Dendritic cell treated with granulocyte-macrophage colony-stimulating factor and Interleukin-4, amounts not matched to agents 40 ng/mL and 50 ng/mL, for 4 days (primary cell): ENCODE measurements at regions of chr5 and their contacts with region 1.

Region 1: GRCh38 chr5:14364576-14365472 is 216.8 kb upstream of the OTULINL start:
- H3K4me3 Mint-ChIP-seq: no peak overlapping the region
- H3K27ac Mint-ChIP-seq: no peak overlapping the region
- H3K4me1 Mint-ChIP-seq: peaks cover 27% of the 10 kb centered on the region
- H3K27me3 Mint-ChIP-seq: no peaks in the 10 kb centered on the region

Region 2: DNA sequence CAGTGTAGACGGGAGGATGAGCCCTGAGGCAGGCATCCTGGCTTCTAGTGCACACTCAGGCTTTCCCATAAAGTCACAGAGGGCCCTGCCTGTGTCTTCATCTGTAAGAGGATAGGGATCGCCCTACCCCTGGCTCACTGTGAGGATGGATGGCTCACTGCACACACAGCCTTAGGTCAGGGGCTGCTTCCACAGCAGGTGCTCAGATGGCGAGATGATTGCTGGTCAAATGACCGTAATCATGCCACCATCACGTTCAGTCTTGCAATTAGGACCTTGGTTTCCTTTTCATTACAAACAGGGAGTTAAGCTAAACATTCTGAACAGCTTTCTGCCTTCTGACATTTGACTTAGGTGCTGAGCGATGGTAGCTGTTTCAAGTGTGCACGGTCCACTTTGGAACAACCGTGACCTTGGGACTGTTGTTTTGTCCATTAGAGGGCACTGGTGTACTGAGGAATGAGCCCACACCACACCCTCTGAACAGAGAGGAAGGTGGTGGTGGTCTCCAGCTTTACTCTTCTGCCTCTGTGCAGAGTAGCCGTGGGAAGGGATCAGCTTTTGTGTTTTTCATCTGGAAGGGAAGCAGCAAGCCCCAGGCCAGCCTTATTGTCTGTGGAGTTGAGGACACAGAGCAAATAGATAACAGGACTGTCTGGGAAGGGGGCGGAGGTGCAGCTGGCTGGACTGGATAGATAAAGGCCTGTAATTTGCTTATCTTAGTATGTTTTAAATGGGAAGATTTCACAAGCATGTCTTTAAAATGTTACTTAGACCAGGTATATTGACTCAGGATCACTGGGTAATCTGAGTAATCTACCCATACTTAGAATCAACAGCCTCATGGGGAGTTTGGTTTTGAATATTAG is 38.6 kb before region 1 on chr5:
- intact Hi-C with region 1: loop called (anchors 5 kb)
- H3K4me3 Mint-ChIP-seq: no peak overlapping the region
- H3K27ac Mint-ChIP-seq: no peak overlapping the region
- H3K4me1 Mint-ChIP-seq: peaks cover 27% of the 10 kb centered on the region
- H3K27me3 Mint-ChIP-seq: no peaks in the 10 kb centered on the region

Region 3: GRCh38 chr5:14491015-14491915 is 126.4 kb after region 1 on chr5:
- intact Hi-C with region 1: no loop called
- H3K4me3 Mint-ChIP-seq: peak overlapping the region; percentile 4
- H3K27ac Mint-ChIP-seq: peak overlapping the region; percentile 84
- H3K4me1 Mint-ChIP-seq: peaks cover 65% of the 10 kb centered on the region
- H3K27me3 Mint-ChIP-seq: no peaks in the 10 kb centered on the region

Region 4: DNA sequence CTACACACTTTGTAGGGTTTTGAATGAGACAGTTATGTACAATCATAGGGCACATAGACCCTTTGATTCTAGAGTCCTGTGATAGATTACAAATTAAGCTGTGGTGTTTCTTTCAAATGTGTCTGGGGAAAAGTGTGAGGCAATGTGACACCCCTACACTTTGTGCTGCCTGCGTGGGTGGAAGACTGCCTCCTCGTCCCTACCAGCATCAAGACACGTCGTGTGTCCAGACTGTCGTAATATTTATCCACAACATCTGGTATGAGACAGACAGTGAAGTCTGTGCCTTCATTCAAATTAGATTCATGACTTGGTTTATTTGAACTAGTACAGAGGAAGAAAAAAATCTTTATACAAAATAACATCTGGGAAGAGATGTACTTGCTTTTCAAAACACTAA is 786.8 kb after region 1 on chr5:
- intact Hi-C with region 1: no loop called
- H3K4me3 Mint-ChIP-seq: no peak overlapping the region
- H3K27ac Mint-ChIP-seq: no peak overlapping the region
- H3K4me1 Mint-ChIP-seq: no peaks in the 10 kb centered on the region
- H3K27me3 Mint-ChIP-seq: no peaks in the 10 kb centered on the region